CD8-positive, alpha-beta T cell (primary cell): ENCODE measurements at regions of chr3 and their contacts with region 1.

Region 1: GRCh38 chr3:39346785-39347585 is 17.5 kb downstream of the CCR8 start:
- DNase-seq: no peak
- ATAC-seq: no peak
- H3K4me3 ChIP-seq: no peak overlapping the region
- H3K4me3 Mint-ChIP-seq: no peak overlapping the region
- H3K27ac ChIP-seq: no peak overlapping the region
- H3K27ac Mint-ChIP-seq: no peak overlapping the region
- H3K4me1 ChIP-seq: peaks cover 10% of the 10 kb centered on the region
- H3K4me1 Mint-ChIP-seq: peaks cover 29% of the 10 kb centered on the region
- H3K27me3 ChIP-seq: no peaks in the 10 kb centered on the region
- H3K27me3 Mint-ChIP-seq: no peaks in the 10 kb centered on the region
- CTCF ChIP-seq: no peak

Region 2: DNA sequence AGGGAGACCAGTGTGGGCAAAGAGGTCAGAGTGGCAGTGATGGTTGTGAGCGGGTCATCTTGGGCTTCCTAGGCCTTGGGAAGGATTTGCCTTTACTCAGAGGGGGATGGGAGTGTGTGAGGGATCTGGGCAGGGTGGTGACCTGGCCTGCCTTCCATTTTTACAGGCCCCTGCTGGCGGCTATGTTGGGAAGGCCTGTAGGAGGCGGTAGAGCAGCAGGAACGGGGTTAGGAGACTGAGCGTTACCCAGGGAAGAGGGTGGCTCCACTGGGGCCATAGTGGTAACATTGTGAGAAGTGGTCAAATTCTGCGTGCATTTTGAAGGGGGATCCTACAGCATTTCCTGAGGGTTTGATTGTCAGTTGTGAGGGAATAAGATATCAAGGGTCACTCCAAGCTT is 1792.6 kb before region 1 on chr3:
- CTCF ChIA-PET with region 1: no interaction called
- POLR2A ChIA-PET with region 1: no interaction called
- intact Hi-C with region 1: no loop called
- DNase-seq: no peak
- ATAC-seq: no peak
- H3K4me3 ChIP-seq: no peak overlapping the region
- H3K4me3 Mint-ChIP-seq: no peak overlapping the region
- H3K27ac ChIP-seq: no peak overlapping the region
- H3K27ac Mint-ChIP-seq: no peak overlapping the region
- H3K4me1 ChIP-seq: no peaks in the 10 kb centered on the region
- H3K4me1 Mint-ChIP-seq: no peaks in the 10 kb centered on the region
- H3K27me3 ChIP-seq: no peaks in the 10 kb centered on the region
- H3K27me3 Mint-ChIP-seq: peaks cover 2% of the 10 kb centered on the region
- CTCF ChIP-seq: no peak

Region 3: GRCh38 chr3:39361252-39361927 is 14.4 kb after region 1 on chr3:
- CTCF ChIA-PET with region 1: no interaction called
- POLR2A ChIA-PET with region 1: no interaction called
- intact Hi-C with region 1: loop called in 1 of 2 experiments (anchors 1 kb)
- DNase-seq: peak in 8 of 9 experiments; percentile 29 to 77 (median 55)
- ATAC-seq: peak; percentile 69
- H3K4me3 ChIP-seq: no peak overlapping the region
- H3K4me3 Mint-ChIP-seq: peak overlapping the region; percentile 23
- H3K27ac ChIP-seq: peak overlapping the region in 1 of 2 experiments; percentile 52
- H3K27ac Mint-ChIP-seq: peak overlapping the region; percentile 61
- H3K4me1 ChIP-seq: peaks cover 31% of the 10 kb centered on the region
- H3K4me1 Mint-ChIP-seq: peaks cover 38% of the 10 kb centered on the region
- H3K27me3 ChIP-seq: no peaks in the 10 kb centered on the region
- H3K27me3 Mint-ChIP-seq: no peaks in the 10 kb centered on the region
- CTCF ChIP-seq: no peak